ENCODE measurements at regions of chr11 and their contacts with region 1.

Region 1: GRCh38 chr11:100942016-100942415 is 187.6 kb downstream of the PGR start:
- DNase-seq: peak; percentile 11
- H3K4me3 ChIP-seq: no peak overlapping the region
- H3K27ac ChIP-seq: no peak overlapping the region
- H3K4me1 ChIP-seq: no peaks in the 10 kb centered on the region
- H3K27me3 ChIP-seq: no peaks in the 10 kb centered on the region
- CTCF ChIP-seq: no peak
- EP300 ChIP-seq: no peak
- POLR2A ChIP-seq: no peak

Region 2: DNA sequence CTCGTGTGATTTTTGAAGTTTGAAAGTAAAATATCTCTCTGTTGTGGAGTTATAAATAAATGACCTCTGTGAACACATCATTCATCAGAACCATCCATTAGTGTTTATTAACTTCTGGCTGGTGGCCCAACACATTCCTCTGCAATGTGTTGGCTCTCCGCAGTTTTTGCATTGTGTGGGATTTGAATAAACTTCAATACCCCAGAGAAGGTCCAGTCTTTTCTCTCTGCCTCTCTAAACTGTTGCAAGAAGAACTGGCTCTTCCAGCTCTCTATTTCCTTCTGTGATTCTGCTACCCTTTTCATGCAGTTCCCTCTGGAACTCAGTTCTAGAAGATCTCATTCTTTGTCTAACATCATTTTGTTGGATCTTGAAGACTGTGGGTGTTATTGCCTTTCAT is 379.9 kb before region 1 on chr11:
- in situ Hi-C with region 1: no loop called
- intact Hi-C with region 1: loop called (anchors 5 kb)
- DNase-seq: no peak
- H3K4me3 ChIP-seq: no peak overlapping the region
- H3K27ac ChIP-seq: peak overlapping the region in 1 of 4 donors; percentile 10
- H3K4me1 ChIP-seq: peaks cover 0 to 25% (median 0%) of the 10 kb centered on the region in 4 donors
- H3K27me3 ChIP-seq: no peaks in the 10 kb centered on the region
- CTCF ChIP-seq: no peak
- EP300 ChIP-seq: no peak
- POLR2A ChIP-seq: no peak

Measured in transverse colon (tissue), 4 donors.